ENCODE measurements at regions of chr11 and their contacts with region 1.

Region 1: GRCh38 chr11:57131080-57131790 is 50.5 kb upstream of the LRRC55 start:
- DNase-seq: peak; percentile 38 to 83
- H3K4me3 ChIP-seq: no peak overlapping the region
- H3K27ac ChIP-seq: no peak overlapping the region
- H3K4me1 ChIP-seq: no peaks in the 10 kb centered on the region
- H3K27me3 ChIP-seq: no peaks in the 10 kb centered on the region
- CTCF ChIP-seq: peak; percentile 97 to 99 (median 98)
- EP300 ChIP-seq: no peak
- POLR2A ChIP-seq: no peak
- RAD21 ChIP-seq: peak; percentile 100

Region 2: GRCh38 chr11:56577621-56578020 is 553.6 kb before region 1 on chr11 and contains the start of gene OR5M10:
- CTCF ChIA-PET with region 1: no interaction called
- POLR2A ChIA-PET with region 1: no interaction called
- DNase-seq: no peak
- H3K4me3 ChIP-seq: no peak within 1 kb of the TSS
- H3K27ac ChIP-seq: no peak within 1 kb of the TSS
- H3K4me1 ChIP-seq: no peaks in the 10 kb centered on the region
- H3K27me3 ChIP-seq: no peaks in the 10 kb centered on the region
- CTCF ChIP-seq: no peak
- EP300 ChIP-seq: no peak
- POLR2A ChIP-seq: no peak
- RAD21 ChIP-seq: no peak
- total RNA-seq, gene OR5M10: not detected in 2 replicates

Region 3: DNA sequence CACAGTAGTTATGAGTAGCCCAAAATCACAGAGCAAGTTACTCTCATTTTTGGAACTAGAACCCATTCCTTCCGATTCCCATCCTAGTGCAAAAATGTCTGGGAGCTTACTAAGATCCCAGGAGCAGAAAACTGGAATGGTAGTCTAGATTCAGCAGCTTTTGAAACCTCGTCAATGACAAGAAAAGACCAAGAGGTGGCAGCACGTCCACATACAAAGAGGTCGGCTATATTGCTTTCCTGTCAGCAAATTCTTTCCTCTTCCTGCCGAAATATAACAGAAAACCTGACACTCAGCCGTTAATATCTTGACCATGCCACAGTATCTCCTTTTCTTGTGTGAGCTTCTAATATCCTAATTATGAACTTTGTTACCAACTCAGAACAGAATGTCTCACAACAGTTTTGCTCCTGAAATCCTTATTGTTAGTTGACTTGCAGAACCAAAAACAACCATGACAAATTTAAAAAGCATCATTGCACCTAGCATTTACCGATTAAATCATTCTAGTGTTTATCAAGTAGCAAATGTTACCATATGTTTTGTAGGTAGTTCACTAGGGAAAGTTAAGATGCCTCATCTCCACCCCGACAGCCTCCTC is 289.9 kb before region 1 on chr11:
- CTCF ChIA-PET with region 1: interaction called, 16 read pairs
- POLR2A ChIA-PET with region 1: no interaction called
- DNase-seq: peak in 1 of 2 experiments; percentile 62
- H3K4me3 ChIP-seq: no peak overlapping the region
- H3K27ac ChIP-seq: no peak overlapping the region
- H3K4me1 ChIP-seq: no peaks in the 10 kb centered on the region
- H3K27me3 ChIP-seq: no peaks in the 10 kb centered on the region
- CTCF ChIP-seq: peak in 2 of 3 experiments; percentile 70 to 71; a peak in 3 of 4 replicates
- EP300 ChIP-seq: no peak
- POLR2A ChIP-seq: no peak
- RAD21 ChIP-seq: peak; percentile 91 to 93

Region 4: GRCh38 chr11:57072640-57073039 is 58.6 kb before region 1 on chr11:
- CTCF ChIA-PET with region 1: no interaction called
- POLR2A ChIA-PET with region 1: no interaction called
- DNase-seq: no peak
- H3K4me3 ChIP-seq: no peak overlapping the region
- H3K27ac ChIP-seq: no peak overlapping the region
- H3K4me1 ChIP-seq: no peaks in the 10 kb centered on the region
- H3K27me3 ChIP-seq: no peaks in the 10 kb centered on the region
- CTCF ChIP-seq: no peak
- EP300 ChIP-seq: no peak
- POLR2A ChIP-seq: no peak
- RAD21 ChIP-seq: no peak

Region 5: GRCh38 chr11:57116654-57117053 is 14.6 kb before region 1 on chr11:
- CTCF ChIA-PET with region 1: interaction called, 65 read pairs
- POLR2A ChIA-PET with region 1: no interaction called
- DNase-seq: peak; percentile 13 to 52
- H3K4me3 ChIP-seq: no peak overlapping the region
- H3K27ac ChIP-seq: no peak overlapping the region
- H3K4me1 ChIP-seq: peaks cover 0 to 2% (median 0%) of the 10 kb centered on the region in 4 experiments; a peak in 2 of 7 replicates
- H3K27me3 ChIP-seq: no peaks in the 10 kb centered on the region; a peak in 1 of 7 replicates
- CTCF ChIP-seq: peak; percentile 43 to 67 (median 64)
- EP300 ChIP-seq: no peak
- POLR2A ChIP-seq: no peak
- RAD21 ChIP-seq: peak; percentile 82 to 84

Region 6: GRCh38 chr11:57155838-57156607 is 24.8 kb after region 1 on chr11:
- CTCF ChIA-PET with region 1: interaction called, 10 read pairs
- POLR2A ChIA-PET with region 1: no interaction called
- DNase-seq: peak in 1 of 2 experiments; percentile 48
- H3K4me3 ChIP-seq: peak overlapping the region in 1 of 4 experiments; percentile 11; a peak in 1 of 8 replicates
- H3K27ac ChIP-seq: no peak overlapping the region
- H3K4me1 ChIP-seq: peaks cover 3 to 12% (median 7%) of the 10 kb centered on the region in 4 experiments
- H3K27me3 ChIP-seq: peaks cover 0 to 2% (median under 1%) of the 10 kb centered on the region in 4 experiments; a peak in 3 of 7 replicates
- CTCF ChIP-seq: no peak
- EP300 ChIP-seq: no peak
- POLR2A ChIP-seq: no peak
- RAD21 ChIP-seq: no peak